Activated T-helper 2 cell treated with anti-CD3 and anti-CD28 coated beads, Interferon-gamma antibody, Interleukin-2, Interleukin-4, amounts not matched to agents 10 μg/mL and 5 μg/mL and 100 μg/mL, durations not matched to agents 14 hours and 24 hours and 36 hours (primary cell): ENCODE measurements at regions of chr3 and their contacts with region 1.

Region 1: DNA sequence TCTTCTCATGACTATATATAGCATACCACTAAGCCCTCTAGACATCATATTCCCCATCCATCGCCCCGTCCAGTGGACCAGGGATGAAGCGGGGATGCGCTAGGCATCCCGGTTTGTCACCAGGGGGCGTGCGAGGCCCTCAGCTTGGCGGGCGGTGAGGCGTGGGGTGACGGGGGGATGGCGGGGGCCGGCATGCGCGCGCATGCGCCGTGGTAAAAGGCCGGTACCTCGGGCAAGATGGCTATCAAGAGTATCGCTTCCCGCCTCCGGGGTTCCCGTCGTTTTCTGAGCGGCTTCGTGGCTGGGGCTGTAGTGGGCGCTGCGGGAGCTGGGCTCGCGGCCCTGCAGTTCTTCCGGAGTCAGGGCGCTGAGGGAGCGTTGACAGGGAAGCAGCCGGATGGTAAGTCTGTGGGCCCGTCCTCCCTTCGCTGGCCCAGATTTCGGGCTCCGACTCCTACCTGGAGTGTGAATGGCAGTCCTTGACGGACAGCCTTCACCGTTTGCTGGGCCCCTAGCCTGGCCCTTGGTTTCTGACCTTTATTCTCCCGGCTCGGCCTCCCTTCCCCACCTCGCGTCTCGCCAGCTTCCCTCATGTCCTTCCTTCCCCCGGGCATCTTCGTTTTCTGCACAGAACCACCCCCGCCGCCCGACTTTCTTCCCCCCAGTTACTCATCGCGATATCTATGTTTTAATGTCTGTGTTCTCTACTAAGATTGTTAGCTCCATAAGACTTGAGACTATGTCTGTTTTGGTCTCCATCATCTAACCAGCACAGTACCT is at the start of gene EXOG:
- DNase-seq: peak; percentile 86
- H3K4me3 Mint-ChIP-seq: peak within 1 kb of the TSS; percentile 91
- H3K27ac Mint-ChIP-seq: peak within 1 kb of the TSS; percentile 82
- H3K4me1 Mint-ChIP-seq: peaks cover 15% of the 10 kb centered on the region
- H3K27me3 Mint-ChIP-seq: no peaks in the 10 kb centered on the region
- total RNA-seq, gene EXOG: 13.7 and 14.0 TPM in 2 replicates

Region 2: GRCh38 chr3:37907906-37908305 is 588.4 kb before region 1 on chr3:
- intact Hi-C with region 1: no loop called
- DNase-seq: peak; percentile 46
- H3K4me3 Mint-ChIP-seq: peak overlapping the region; percentile 24
- H3K27ac Mint-ChIP-seq: peak overlapping the region; percentile 85
- H3K4me1 Mint-ChIP-seq: peaks cover 54% of the 10 kb centered on the region
- H3K27me3 Mint-ChIP-seq: peaks cover 3% of the 10 kb centered on the region

Region 3: DNA sequence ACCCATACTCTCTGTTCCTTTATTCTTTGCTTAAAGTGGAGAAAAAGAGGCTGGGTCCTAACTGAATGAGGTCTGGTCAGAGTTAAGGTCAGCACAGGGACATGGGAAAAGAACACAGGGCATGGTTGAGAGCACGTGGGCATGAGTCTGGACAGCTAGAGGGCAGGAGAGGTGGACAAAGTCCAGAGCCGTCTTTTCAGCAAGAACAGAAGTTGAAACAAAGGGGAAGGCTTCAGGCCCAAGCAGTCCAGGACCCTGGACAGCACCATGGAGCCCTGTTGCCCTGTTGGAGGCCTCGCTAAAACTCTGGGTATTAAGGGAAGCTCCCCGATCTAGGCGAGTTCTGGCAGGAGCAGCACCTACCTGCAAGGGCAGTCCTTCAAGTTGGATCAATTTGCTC is 99.0 kb before region 1 on chr3:
- intact Hi-C with region 1: no loop called
- DNase-seq: no peak
- H3K4me3 Mint-ChIP-seq: no peak overlapping the region
- H3K27ac Mint-ChIP-seq: no peak overlapping the region
- H3K4me1 Mint-ChIP-seq: no peaks in the 10 kb centered on the region
- H3K27me3 Mint-ChIP-seq: no peaks in the 10 kb centered on the region

Region 4: DNA sequence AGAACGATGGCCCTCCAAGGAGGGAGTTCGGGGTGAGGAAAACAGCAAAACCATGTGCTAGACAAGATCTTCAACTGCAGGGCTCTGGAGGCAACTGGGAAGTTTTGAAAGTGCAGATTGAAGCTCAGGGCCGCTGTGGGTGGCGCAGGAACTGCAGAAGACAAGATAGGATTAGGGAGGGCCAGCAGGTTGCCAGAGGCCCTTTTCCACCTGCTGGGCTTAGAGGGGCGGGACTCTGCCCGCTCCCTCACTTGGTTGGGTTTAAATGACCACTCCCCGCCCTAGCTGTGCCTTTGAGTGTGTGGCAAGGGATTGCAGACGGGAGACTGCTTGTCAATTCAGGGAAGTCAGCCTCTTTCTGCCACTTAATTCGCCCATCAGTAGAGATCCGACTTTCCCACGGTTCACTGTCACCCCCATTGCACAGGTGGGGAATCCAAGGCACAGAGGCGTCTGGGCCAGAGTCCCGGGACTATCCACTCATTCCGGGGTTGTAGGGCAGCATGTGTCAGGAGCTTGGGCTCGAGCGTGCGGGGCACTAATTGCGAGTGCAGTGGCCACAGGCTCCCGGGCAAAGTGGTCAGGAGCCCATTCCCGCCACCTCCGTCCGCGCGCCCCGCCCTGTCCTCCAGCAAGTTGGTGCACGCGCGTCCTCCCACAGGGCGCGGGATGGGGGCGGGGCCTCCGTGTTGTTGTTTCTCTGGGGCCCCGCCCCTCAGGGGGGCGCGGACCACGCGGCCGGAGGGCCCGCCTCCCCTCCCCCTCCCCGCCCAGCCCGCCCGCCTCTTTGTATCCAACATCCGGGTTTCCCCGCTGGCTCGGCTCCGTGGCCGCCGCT is 43.0 kb before region 1 on chr3 and contains the start of gene ACVR2B:
- intact Hi-C with region 1: loop called (anchors 2 kb)
- DNase-seq: peak; percentile 61
- H3K4me3 Mint-ChIP-seq: peak within 1 kb of the TSS; percentile 97
- H3K27ac Mint-ChIP-seq: peak within 1 kb of the TSS; percentile 86
- H3K4me1 Mint-ChIP-seq: peaks cover 18% of the 10 kb centered on the region
- H3K27me3 Mint-ChIP-seq: peaks cover 22% of the 10 kb centered on the region
- total RNA-seq, gene ACVR2B: 10.3 and 12.0 TPM in 2 replicates

Region 5: GRCh38 chr3:38521391-38521987 is 25.2 kb after region 1 on chr3:
- intact Hi-C with region 1: loop called (anchors 2 kb)
- DNase-seq: peak; percentile 28
- H3K4me3 Mint-ChIP-seq: no peak overlapping the region
- H3K27ac Mint-ChIP-seq: no peak overlapping the region
- H3K4me1 Mint-ChIP-seq: peaks cover 21% of the 10 kb centered on the region
- H3K27me3 Mint-ChIP-seq: no peaks in the 10 kb centered on the region

Region 6: GRCh38 chr3:38651154-38651789 is 155.0 kb after region 1 on chr3:
- intact Hi-C with region 1: loop called (anchors 1 kb)
- DNase-seq: peak; percentile 58
- H3K4me3 Mint-ChIP-seq: no peak overlapping the region
- H3K27ac Mint-ChIP-seq: no peak overlapping the region
- H3K4me1 Mint-ChIP-seq: peaks cover 7% of the 10 kb centered on the region
- H3K27me3 Mint-ChIP-seq: peaks cover 20% of the 10 kb centered on the region

Region 7: DNA sequence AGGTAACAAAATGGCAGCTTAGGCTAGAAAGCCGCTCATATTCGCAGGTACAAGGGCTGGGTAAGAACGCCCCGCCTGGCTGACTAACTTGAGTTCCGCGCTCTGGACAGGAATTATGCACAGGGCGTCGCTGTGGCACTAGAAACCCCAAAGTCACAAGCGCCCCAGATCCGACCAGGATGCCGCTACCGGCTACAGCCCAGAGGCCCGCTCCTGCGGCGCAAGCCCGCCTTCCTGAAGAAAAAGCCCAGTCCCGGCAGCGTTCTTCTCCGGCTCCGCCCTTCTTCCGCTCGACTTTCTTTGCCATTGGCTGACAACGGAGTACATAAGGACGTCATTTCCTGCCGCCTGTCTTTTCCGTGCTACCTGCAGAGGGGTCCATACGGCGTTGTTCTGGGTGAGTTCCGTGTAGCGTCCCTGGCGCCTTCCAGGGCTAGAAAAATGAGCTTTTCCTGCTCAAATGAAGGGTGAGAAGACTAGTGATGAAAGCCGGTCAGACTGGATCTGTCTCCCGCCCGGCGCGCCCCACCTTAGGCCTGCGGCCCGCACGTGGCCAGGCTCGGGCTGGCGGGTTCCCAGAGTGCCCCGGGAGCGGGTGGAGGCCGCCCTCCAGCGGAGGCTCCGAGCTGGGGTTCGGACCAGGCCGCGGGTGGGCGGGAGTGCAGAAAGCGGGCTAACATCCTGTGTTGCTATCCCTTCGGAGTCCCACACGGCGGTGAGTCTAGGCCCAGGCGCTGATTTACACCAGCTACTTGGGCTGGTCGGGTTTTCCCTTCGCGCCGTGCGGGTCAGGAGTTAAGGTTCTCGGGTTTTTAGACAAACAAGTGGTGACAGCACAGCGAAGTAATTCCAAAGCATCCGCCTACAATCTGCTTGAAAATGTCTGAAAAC is 910.3 kb after region 1 on chr3 and contains the start of gene RPSA:
- intact Hi-C with region 1: loop called (anchors 2 kb)
- DNase-seq: peak; percentile 98
- H3K4me3 Mint-ChIP-seq: peak within 1 kb of the TSS; percentile 94
- H3K27ac Mint-ChIP-seq: peak within 1 kb of the TSS; percentile 98
- H3K4me1 Mint-ChIP-seq: peaks cover 40% of the 10 kb centered on the region
- H3K27me3 Mint-ChIP-seq: no peaks in the 10 kb centered on the region
- total RNA-seq, gene RPSA: 2,053 and 2,074 TPM in 2 replicates